ENCODE measurements at regions of chrX and their contacts with region 1.

Region 1: DNA sequence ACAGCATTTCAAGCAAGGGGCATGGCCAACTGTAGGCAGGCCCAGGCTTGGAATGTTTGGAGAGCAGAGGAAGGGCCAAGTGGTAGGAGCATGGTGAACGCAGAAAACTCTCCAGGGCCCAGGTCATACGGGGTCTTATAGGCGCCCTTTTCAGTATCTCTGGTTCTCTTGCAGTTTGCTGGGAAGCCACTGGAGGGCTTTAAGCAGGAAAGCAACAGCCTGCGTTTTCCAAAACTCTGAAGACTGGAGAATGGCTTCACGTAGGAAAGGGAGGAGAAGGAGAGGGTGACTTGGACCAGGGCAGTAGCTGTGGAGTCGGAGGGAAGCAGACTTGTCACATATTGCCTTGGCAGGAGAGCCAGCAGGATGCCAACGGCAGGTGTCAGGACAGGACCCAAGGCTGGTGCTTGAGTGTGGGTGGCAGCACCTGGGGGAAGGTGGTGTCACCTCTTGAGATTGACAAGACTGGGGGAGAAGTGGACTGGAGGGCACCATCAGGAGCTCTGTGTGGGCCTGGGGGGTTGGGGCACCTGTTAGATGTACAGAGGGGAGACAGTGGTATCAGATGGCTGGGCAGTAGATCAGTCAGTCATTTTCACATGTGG is 21.9 kb downstream of the TKTL1 start:
- DNase-seq: no peak
- ATAC-seq: no peak

Region 2: GRCh38 chrX:154534862-154535670 is 217.6 kb after region 1 on chrX:
- intact Hi-C with region 1: loop called (anchors 5 kb)
- DNase-seq: peak; percentile 91
- ATAC-seq: peak; percentile 96

Measured in Right ventricle myocardium superior (tissue), 1 donor.